H1 (cell line): ENCODE measurements at regions of chr11 and their contacts with region 1.

Region 1: GRCh38 chr11:61792310-61793085 is at the starts of genes FEN1 and TMEM258:
- DNase-seq: peak; percentile 80 to 95
- H3K4me3 ChIP-seq: peak within 1 kb of the TSS; percentile 86 to 99 (median 98)
- H3K27ac ChIP-seq: peak within 1 kb of the TSS; percentile 100
- H3K4me1 ChIP-seq: peaks cover 0 to 4% (median 0%) of the 10 kb centered on the region in 4 experiments; a peak in 1 of 7 replicates
- H3K27me3 ChIP-seq: no peaks in the 10 kb centered on the region
- CTCF ChIP-seq: peak in 1 of 3 experiments; percentile 4; a peak in 1 of 4 replicates
- EP300 ChIP-seq: no peak
- POLR2A ChIP-seq: peak; percentile 57 to 82
- RAD21 ChIP-seq: no peak
- total RNA-seq, gene FEN1: 84.5 and 86.1 TPM in 2 replicates
- total RNA-seq, gene TMEM258: 186 and 191 TPM in 2 replicates

Region 2: GRCh38 chr11:61733120-61733978 is 59.1 kb before region 1 on chr11:
- CTCF ChIA-PET with region 1: interaction called, 12 read pairs
- POLR2A ChIA-PET with region 1: interaction called, 3 read pairs
- DNase-seq: peak in 1 of 2 experiments; percentile 89
- H3K4me3 ChIP-seq: no peak overlapping the region
- H3K27ac ChIP-seq: no peak overlapping the region
- H3K4me1 ChIP-seq: no peaks in the 10 kb centered on the region
- H3K27me3 ChIP-seq: no peaks in the 10 kb centered on the region
- CTCF ChIP-seq: peak in 2 of 3 experiments; percentile 96 to 99; a peak in 3 of 4 replicates
- EP300 ChIP-seq: no peak
- POLR2A ChIP-seq: no peak
- RAD21 ChIP-seq: peak; percentile 94 to 97

Region 3: DNA sequence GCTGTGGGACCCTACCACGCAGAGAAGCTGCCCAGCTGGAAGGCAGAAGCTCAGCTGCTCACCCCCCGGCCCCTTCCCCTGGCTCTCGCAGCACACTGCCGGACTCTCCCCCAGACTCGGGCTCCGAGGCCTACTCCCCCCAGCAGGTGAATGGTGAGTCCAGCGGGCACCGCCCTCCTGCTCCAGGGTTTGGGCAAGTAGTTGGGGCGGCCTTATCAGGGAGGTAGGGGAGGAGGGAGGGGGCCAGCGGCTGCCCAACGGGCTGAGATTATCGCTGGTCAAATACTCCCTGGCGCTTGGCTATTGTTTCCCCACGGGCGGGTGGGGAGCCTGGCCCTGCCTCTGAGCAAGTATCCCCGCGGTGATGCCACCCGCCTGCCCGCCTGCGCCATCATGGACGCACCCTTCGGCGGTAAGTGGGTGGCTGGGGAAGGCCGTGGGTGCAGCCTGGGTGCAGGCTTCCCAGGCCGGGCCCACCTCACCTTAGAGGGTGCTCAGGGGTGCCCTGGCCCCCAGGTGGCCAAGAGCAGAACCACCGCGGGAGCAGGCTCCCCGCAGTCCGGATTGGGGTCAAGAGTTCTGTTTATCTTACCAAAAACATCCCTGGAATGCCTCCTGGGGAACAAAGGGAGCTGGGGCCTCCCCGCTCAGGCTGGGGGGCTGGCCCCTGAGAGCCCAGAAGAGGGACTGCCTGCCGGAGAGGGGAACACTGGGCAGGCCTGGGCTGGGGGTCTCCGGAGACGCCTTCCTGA is 23.2 kb before region 1 on chr11:
- CTCF ChIA-PET with region 1: interaction called, 26 read pairs
- POLR2A ChIA-PET with region 1: interaction called, 16 read pairs
- DNase-seq: no peak
- H3K4me3 ChIP-seq: no peak overlapping the region
- H3K27ac ChIP-seq: no peak overlapping the region; the same call in 1 of the 2 replicates
- H3K4me1 ChIP-seq: peaks cover 0 to 21% (median 15%) of the 10 kb centered on the region in 4 experiments; a peak in 5 of 7 replicates
- H3K27me3 ChIP-seq: no peaks in the 10 kb centered on the region
- CTCF ChIP-seq: peak; percentile 36 to 44 (median 43)
- EP300 ChIP-seq: no peak
- POLR2A ChIP-seq: no peak
- RAD21 ChIP-seq: no peak; a peak in 1 of 4 replicates

Region 4: DNA sequence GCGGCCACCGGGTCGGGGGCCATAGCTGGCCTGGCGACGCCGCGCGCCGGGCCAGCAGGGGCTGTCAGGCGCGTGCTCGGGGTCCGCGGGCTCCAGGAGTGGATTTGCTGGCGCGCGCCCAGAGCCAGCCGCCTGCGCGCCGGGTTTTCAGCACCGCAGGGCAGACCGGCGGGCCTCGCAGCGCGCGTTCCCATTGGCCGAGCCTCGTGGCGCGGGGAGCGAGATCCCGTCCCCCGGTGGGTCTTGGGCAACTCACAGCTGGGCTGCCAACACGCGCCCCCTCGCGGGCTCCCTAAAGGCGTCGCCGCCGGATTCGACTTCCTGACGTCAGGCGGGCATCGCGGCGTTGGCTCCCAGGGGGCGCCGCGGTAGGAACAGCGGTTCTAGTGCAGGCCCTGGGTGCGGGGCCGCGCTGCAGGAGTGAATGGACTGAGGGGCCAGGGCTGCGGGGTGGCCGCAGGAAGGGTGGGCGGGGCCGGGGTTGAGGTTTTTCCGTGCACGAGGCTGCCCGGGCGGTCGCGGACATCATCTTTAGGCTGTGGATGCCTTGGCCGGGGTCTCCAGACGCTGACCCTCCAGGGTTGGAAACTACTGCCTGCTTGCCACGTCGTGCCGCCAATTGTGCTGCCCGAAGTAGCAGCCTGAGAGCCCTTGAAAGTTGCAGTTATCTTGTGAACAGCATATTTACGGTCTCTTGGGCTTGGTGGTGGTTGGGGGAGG is 24.4 kb after region 1 on chr11 and contains the start of gene FADS1:
- CTCF ChIA-PET with region 1: interaction called, 118 read pairs
- POLR2A ChIA-PET with region 1: interaction called, 354 read pairs
- DNase-seq: peak; percentile 89 to 92
- H3K4me3 ChIP-seq: peak within 1 kb of the TSS; percentile 74 to 92 (median 76)
- H3K27ac ChIP-seq: peak within 1 kb of the TSS; percentile 85
- H3K4me1 ChIP-seq: peaks cover 2 to 9% (median 5%) of the 10 kb centered on the region in 4 experiments; a peak in 5 of 7 replicates
- H3K27me3 ChIP-seq: no peaks in the 10 kb centered on the region
- CTCF ChIP-seq: peak; percentile 51 to 62 (median 57)
- EP300 ChIP-seq: 0 out of 3 replicates have a peak, but pooled peaks of 1 of the 2 experiments have one; percentile 21
- POLR2A ChIP-seq: peak in 1 of 2 experiments; percentile 17; a peak in 2 of 3 replicates
- RAD21 ChIP-seq: peak in 1 of 2 experiments; percentile 23; a peak in 2 of 4 replicates
- total RNA-seq, gene FADS1: 115 and 116 TPM in 2 replicates

Region 5: GRCh38 chr11:61841636-61842527 is 49.4 kb after region 1 on chr11:
- CTCF ChIA-PET with region 1: interaction called, 15 read pairs
- POLR2A ChIA-PET with region 1: interaction called, 5 read pairs
- DNase-seq: no peak
- H3K4me3 ChIP-seq: no peak overlapping the region
- H3K27ac ChIP-seq: no peak overlapping the region
- H3K4me1 ChIP-seq: no peaks in the 10 kb centered on the region; a peak in 1 of 7 replicates
- H3K27me3 ChIP-seq: no peaks in the 10 kb centered on the region; a peak in 1 of 7 replicates
- CTCF ChIP-seq: no peak
- EP300 ChIP-seq: no peak
- POLR2A ChIP-seq: no peak
- RAD21 ChIP-seq: no peak

Region 6: GRCh38 chr11:61885166-61885778 is 92.8 kb after region 1 on chr11:
- CTCF ChIA-PET with region 1: interaction called, 12 read pairs
- POLR2A ChIA-PET with region 1: no interaction called
- DNase-seq: peak in 1 of 2 experiments; percentile 45
- H3K4me3 ChIP-seq: no peak overlapping the region
- H3K27ac ChIP-seq: no peak overlapping the region
- H3K4me1 ChIP-seq: peaks cover 0 to 15% (median 6%) of the 10 kb centered on the region in 4 experiments; a peak in 5 of 7 replicates
- H3K27me3 ChIP-seq: no peaks in the 10 kb centered on the region
- CTCF ChIP-seq: no peak
- EP300 ChIP-seq: no peak
- POLR2A ChIP-seq: no peak
- RAD21 ChIP-seq: 0 out of 4 replicates have a peak, but pooled peaks of 1 of the 2 experiments have one; percentile 2